Activated T-helper 2 cell treated with anti-CD3 and anti-CD28 coated beads, Interferon-gamma antibody, Interleukin-2, Interleukin-4, amounts not matched to agents 10 μg/mL and 5 μg/mL and 100 μg/mL, durations not matched to agents 14 hours and 24 hours and 36 hours (primary cell): ENCODE measurements at regions of chr1 and their contacts with region 1.

Region 1: GRCh38 chr1:219209578-219209977 is 35.9 kb downstream of the LYPLAL1 start:
- DNase-seq: no peak
- H3K4me3 Mint-ChIP-seq: no peak overlapping the region
- H3K27ac Mint-ChIP-seq: no peak overlapping the region
- H3K4me1 Mint-ChIP-seq: no peaks in the 10 kb centered on the region
- H3K27me3 Mint-ChIP-seq: no peaks in the 10 kb centered on the region

Region 2: GRCh38 chr1:218945050-218945449 is 264.5 kb before region 1 on chr1:
- intact Hi-C with region 1: no loop called
- DNase-seq: no peak
- H3K4me3 Mint-ChIP-seq: no peak overlapping the region
- H3K27ac Mint-ChIP-seq: no peak overlapping the region
- H3K4me1 Mint-ChIP-seq: no peaks in the 10 kb centered on the region
- H3K27me3 Mint-ChIP-seq: no peaks in the 10 kb centered on the region

Region 3: GRCh38 chr1:219189021-219189824 is 20.4 kb before region 1 on chr1:
- intact Hi-C with region 1: no loop called
- DNase-seq: no peak
- H3K4me3 Mint-ChIP-seq: no peak overlapping the region
- H3K27ac Mint-ChIP-seq: no peak overlapping the region
- H3K4me1 Mint-ChIP-seq: peaks cover 21% of the 10 kb centered on the region
- H3K27me3 Mint-ChIP-seq: no peaks in the 10 kb centered on the region

Region 4: GRCh38 chr1:219566951-219567947 is 357.7 kb after region 1 on chr1:
- intact Hi-C with region 1: loop called (anchors 2 kb)
- DNase-seq: no peak
- H3K4me3 Mint-ChIP-seq: no peak overlapping the region
- H3K27ac Mint-ChIP-seq: no peak overlapping the region
- H3K4me1 Mint-ChIP-seq: no peaks in the 10 kb centered on the region
- H3K27me3 Mint-ChIP-seq: peaks cover 6% of the 10 kb centered on the region

Region 5: DNA sequence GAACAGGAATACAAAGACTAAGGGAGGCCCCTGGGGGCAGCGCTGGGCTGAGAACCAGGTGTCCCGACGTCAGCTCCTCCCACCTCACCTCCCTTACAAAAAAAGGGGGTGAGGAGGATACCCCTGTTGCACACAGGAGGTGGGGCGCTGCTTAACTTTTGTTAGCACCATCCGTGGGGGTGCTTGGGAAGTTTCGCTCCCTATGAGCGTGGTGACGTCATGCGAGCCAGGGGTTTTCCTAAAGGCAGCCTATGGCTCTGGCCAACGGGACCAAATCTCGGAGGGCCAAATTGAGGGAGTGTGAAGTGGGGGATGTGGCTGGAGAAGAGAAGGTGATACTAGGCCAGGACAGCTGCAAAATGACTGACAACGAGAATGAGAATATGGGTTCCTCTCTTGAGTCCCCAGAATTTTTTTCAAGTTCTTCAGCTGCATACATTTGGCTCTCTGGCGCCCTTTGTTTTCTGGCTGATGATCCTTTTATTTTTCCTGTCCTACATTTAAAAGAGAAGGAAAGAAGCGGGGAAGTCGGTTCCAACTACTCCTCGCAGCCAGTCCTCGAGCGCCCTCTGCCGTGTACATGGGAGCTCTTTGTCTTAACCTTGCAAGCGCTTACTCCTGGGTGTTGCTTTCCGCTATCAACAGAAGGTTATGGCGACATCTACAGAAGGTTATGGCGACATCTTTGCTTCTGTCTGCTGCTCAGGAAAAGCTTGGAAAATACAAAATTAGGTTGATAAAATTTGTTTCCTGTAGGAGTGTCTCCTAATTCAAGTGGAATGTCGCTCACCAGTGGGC is 451.3 kb after region 1 on chr1:
- intact Hi-C with region 1: loop called (anchors 1 kb)
- DNase-seq: peak; percentile 31
- H3K4me3 Mint-ChIP-seq: peak overlapping the region; percentile 47
- H3K27ac Mint-ChIP-seq: no peak overlapping the region
- H3K4me1 Mint-ChIP-seq: peaks cover 9% of the 10 kb centered on the region
- H3K27me3 Mint-ChIP-seq: peaks cover 2% of the 10 kb centered on the region

Region 6: GRCh38 chr1:219741011-219741970 is 531.7 kb after region 1 on chr1:
- intact Hi-C with region 1: no loop called
- DNase-seq: no peak
- H3K4me3 Mint-ChIP-seq: no peak overlapping the region
- H3K27ac Mint-ChIP-seq: no peak overlapping the region
- H3K4me1 Mint-ChIP-seq: no peaks in the 10 kb centered on the region
- H3K27me3 Mint-ChIP-seq: no peaks in the 10 kb centered on the region